ENCODE measurements at regions of chr16 and their contacts with region 1.

Region 1: GRCh38 chr16:4957720-4958509 is at the start of gene SEC14L5:
- DNase-seq: peak; percentile 97 to 98
- ATAC-seq: peak; percentile 94 to 96
- H3K4me3 ChIP-seq: peak within 1 kb of the TSS; percentile 50 to 76 (median 58)
- H3K27ac ChIP-seq: peak within 1 kb of the TSS; percentile 53 to 81 (median 72)
- H3K4me1 ChIP-seq: peaks cover 6 to 11% of the 10 kb centered on the region in 2 donors
- H3K27me3 ChIP-seq: no peaks in the 10 kb centered on the region
- CTCF ChIP-seq: no peak
- POLR2A ChIP-seq: no peak
- total RNA-seq, gene SEC14L5: 0.85 to 5.8 (median 1.5) TPM

Region 2: GRCh38 chr16:4624015-4624826 is 333.7 kb before region 1 on chr16 and contains the start of gene MGRN1:
- in situ Hi-C with region 1: no loop called
- intact Hi-C with region 1: loop called (anchors 2 kb)
- DNase-seq: peak; percentile 93 to 95
- ATAC-seq: peak; percentile 97 to 98
- H3K4me3 ChIP-seq: peak within 1 kb of the TSS; percentile 77 to 97 (median 82)
- H3K27ac ChIP-seq: peak within 1 kb of the TSS; percentile 88 to 96 (median 94)
- H3K4me1 ChIP-seq: peaks cover 19% of the 10 kb centered on the region in 2 donors
- H3K27me3 ChIP-seq: no peaks in the 10 kb centered on the region
- CTCF ChIP-seq: peak; percentile 91 to 97 (median 95)
- POLR2A ChIP-seq: no peak
- total RNA-seq, gene MGRN1: 33.8 to 62.9 (median 55.0) TPM

Region 3: GRCh38 chr16:4734063-4734729 is 223.7 kb before region 1 on chr16 and contains the starts of genes ANKS3 and DNAAF8:
- in situ Hi-C with region 1: no loop called
- intact Hi-C with region 1: loop called (anchors 1 kb)
- DNase-seq: peak; percentile 97
- ATAC-seq: peak; percentile 98
- H3K4me3 ChIP-seq: peak within 1 kb of the TSS; percentile 92 to 100 (median 92)
- H3K27ac ChIP-seq: peak within 1 kb of the TSS; percentile 84 to 97 (median 85)
- H3K4me1 ChIP-seq: peaks cover 13 to 16% of the 10 kb centered on the region in 2 donors
- H3K27me3 ChIP-seq: no peaks in the 10 kb centered on the region
- CTCF ChIP-seq: no peak
- POLR2A ChIP-seq: peak; percentile 48 to 50
- total RNA-seq, gene ANKS3: 6.7 to 16.6 (median 9.0) TPM
- total RNA-seq, gene DNAAF8: 0.44 to 1.2 (median 0.91) TPM

Region 4: DNA sequence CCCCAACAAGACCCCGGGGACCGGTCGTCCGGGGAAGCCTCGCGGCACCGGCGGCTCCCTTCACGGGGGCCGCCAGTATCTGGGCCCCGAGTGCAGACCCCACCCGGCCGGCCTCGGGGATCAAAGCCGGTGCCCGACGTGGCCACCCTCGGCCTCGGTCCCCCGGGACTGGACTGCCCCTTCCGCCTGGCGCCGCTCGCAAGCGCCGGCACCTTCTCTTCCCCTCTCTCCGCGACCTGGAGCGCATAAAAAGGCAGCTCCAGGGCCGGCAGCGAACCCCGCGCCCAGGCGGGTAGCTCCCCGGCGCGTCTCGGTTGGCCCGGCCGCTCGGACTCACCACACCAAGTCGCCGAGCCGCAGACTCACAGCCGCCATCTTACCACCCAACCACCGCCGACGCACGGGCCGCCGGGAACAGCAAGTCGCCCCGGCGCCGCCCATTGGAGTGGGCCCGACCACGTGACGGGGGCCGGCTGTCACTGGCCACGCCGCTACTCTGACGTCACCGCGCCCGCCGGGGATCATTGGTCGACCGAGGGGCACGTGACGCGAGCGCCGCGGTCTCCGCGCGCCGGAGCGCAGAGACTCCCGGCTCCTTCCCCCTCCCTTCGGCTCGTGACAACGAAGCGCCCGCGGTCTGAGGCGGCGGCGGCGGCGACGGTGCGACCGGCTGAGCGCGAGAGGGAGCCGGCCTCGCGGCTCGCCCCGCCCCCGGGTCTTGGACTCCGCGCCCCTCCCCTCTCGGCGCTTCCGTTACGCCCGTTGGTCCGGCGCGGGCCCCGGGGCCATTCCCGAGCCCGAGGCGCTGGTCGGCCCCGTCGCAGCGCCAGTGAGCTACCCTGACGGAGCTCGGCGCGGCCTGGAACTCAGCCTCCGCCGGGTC is 110.8 kb before region 1 on chr16 and contains the starts of genes GLYR1 and UBN1:
- in situ Hi-C with region 1: loop called in 1 of 4 experiments (anchors 10 kb)
- intact Hi-C with region 1: loop called (anchors 2 kb)
- DNase-seq: peak; percentile 99
- ATAC-seq: peak; percentile 90 to 91
- H3K4me3 ChIP-seq: peak within 1 kb of the TSS; percentile 80 to 98 (median 94)
- H3K27ac ChIP-seq: peak within 1 kb of the TSS; percentile 96 to 99 (median 99)
- H3K4me1 ChIP-seq: peaks cover 50 to 54% of the 10 kb centered on the region in 2 donors
- H3K27me3 ChIP-seq: no peaks in the 10 kb centered on the region
- CTCF ChIP-seq: no peak
- POLR2A ChIP-seq: peak; percentile 95 to 96
- total RNA-seq, gene GLYR1: 39.4 to 56.7 (median 53.0) TPM
- total RNA-seq, gene UBN1: 25.3 to 33.4 (median 28.2) TPM

Region 5: GRCh38 chr16:4859900-4860255 is 98.0 kb before region 1 on chr16:
- in situ Hi-C with region 1: no loop called
- intact Hi-C with region 1: no loop called
- DNase-seq: no peak
- ATAC-seq: no peak
- H3K4me3 ChIP-seq: no peak overlapping the region
- H3K27ac ChIP-seq: no peak overlapping the region
- H3K4me1 ChIP-seq: peaks cover 25 to 29% of the 10 kb centered on the region in 2 donors
- H3K27me3 ChIP-seq: no peaks in the 10 kb centered on the region
- CTCF ChIP-seq: no peak
- POLR2A ChIP-seq: no peak

Region 6: DNA sequence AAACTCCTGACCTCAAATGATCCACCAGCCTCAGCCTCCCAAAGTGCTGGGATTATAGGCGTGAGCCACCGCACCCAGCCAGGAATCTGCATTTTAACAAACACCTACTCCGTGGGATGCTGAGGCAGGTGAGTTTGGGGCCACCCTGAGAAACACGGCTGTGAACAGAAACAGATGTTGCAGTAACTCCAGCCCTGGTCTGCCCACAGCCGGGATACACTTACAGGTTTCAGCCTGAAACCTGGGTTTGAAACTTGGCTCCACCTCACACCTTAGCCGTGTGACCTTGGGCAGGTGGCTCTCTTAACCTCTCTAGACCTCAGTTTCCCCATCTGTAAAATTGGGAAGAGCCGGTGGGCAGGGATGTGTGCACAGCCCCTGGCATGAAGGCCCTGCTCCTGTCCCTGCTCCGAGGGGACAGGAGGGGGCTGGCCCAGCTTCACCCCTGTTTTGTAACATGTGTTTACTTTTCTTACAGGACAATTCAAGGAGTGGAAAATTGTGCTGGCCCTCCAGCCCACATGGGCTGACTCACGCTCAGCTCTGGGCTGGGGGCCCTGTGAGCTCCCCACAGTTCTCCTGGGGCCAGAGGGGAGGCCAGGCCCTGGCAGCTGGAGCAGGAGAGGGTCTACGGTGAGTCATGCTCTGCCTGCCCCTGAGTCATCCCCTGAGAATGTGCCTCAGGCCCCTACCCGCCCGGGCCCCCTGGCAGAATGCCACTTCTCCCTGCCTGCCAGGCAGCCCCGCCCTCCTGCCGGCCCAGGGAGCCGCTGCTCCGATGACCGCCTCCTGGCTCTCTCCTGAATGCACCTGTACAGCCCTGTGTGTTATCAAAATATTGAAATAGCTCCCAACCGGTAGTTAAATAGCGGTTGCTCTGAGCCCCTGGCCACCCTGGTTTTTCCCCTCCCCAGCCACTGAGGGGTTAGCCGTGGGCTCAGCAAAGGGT is 13.3 kb before region 1 on chr16:
- in situ Hi-C with region 1: no loop called
- intact Hi-C with region 1: no loop called
- DNase-seq: peak; percentile 67 to 87
- ATAC-seq: peak; percentile 58 to 79
- H3K4me3 ChIP-seq: no peak overlapping the region
- H3K27ac ChIP-seq: peak overlapping the region; percentile 47 to 73 (median 66)
- H3K4me1 ChIP-seq: peaks cover 6 to 16% of the 10 kb centered on the region in 2 donors
- H3K27me3 ChIP-seq: peaks cover 0 to 8% (median 5%) of the 10 kb centered on the region in 3 donors
- CTCF ChIP-seq: no peak
- POLR2A ChIP-seq: no peak

Measured in gastrocnemius medialis (tissue), 4 donors.